Right ventricle myocardium inferior (tissue), 1 donor: ENCODE measurements at regions of chr6 and their contacts with region 1.

Region 1: DNA sequence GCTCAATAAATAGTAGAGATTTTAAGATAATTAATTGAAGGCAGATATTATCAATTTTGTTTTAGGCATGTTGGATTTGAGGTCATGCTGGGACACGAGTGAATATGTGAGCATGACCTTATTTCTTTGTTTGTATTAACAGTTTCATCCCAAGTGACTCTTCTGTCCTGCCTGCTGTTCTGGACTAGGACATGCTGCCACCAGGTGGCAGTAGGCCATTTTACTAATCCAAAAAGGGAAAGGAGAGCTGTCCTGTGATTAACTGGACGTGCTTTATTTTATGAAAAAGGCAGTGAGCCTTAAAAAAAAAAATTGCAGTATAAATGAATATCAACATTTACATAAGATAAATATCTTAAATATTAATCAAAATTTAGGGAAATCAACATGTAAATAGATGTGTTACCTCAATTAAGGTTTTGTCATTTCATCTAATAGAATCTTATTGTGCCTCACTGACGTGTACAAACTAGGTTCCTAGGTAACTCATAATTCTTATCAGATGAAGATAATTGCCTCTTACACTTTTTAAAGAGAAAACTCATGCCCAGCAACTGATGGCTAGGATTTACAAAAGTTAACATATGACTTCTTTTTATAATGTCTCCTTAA is 49.8 kb downstream of the FRK start:
- DNase-seq: peak; percentile 79
- ATAC-seq: peak; percentile 73

Region 2: DNA sequence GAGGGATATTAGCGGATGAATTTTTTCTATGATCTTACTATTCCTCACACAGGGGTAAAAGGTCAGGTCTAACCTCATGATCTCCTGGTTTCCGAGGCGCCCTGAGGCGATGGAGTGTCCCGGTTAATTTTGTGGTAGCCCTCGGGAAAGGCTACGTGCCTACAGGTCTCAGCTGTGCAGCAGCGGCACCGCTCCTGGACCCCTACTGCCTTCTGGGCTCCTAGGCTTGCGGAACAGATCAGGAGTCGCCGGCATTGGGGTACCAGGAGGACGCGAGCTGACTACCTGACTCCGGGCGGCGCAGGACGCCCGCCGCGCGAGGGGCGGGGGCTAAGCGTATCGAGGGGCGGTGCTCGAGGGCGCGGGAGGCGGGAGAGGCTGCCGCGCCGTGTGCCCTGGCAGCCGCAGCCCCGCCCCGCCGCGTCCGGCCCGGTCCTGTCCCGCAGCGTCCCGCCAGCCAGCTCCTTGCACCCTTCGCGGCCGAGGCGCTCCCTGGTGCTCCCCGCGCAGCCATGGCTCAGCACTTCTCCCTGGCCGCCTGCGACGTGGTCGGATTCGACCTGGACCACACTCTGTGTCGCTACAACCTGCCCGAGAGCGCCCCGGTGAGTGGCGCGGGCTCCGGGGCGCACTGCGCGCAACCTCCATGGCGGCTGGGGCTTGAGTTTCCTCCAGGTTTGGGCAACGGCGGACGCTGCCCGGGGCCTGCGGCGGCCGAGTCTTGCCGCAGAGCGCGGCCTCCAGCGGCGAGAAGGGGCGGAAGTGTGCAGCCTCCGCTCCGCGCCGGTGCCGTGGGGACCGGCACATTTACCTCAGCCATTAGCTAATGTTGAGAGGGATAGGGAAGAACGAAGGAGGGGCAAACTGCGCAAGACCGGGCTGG is 89.8 kb after region 1 on chr6 and contains the start of gene NT5DC1:
- intact Hi-C with region 1: loop called (anchors 2 kb)
- DNase-seq: peak; percentile 93
- ATAC-seq: peak; percentile 97
- total RNA-seq, gene NT5DC1: 49.9 TPM